CD8-positive, alpha-beta T cell (primary cell): ENCODE measurements at regions of chr13 and their contacts with region 1.

Region 1: GRCh38 chr13:110412132-110412914 is 105.2 kb downstream of the COL4A2 start:
- DNase-seq: peak in 8 of 9 experiments; percentile 15 to 66 (median 48)
- ATAC-seq: peak; percentile 46
- H3K4me3 ChIP-seq: no peak overlapping the region
- H3K4me3 Mint-ChIP-seq: no peak overlapping the region
- H3K27ac ChIP-seq: no peak overlapping the region
- H3K27ac Mint-ChIP-seq: no peak overlapping the region
- H3K4me1 ChIP-seq: no peaks in the 10 kb centered on the region
- H3K4me1 Mint-ChIP-seq: no peaks in the 10 kb centered on the region
- H3K27me3 ChIP-seq: peaks cover 2 to 5% of the 10 kb centered on the region in 2 experiments
- H3K27me3 Mint-ChIP-seq: peaks cover 52% of the 10 kb centered on the region
- CTCF ChIP-seq: peak; percentile 79

Region 2: DNA sequence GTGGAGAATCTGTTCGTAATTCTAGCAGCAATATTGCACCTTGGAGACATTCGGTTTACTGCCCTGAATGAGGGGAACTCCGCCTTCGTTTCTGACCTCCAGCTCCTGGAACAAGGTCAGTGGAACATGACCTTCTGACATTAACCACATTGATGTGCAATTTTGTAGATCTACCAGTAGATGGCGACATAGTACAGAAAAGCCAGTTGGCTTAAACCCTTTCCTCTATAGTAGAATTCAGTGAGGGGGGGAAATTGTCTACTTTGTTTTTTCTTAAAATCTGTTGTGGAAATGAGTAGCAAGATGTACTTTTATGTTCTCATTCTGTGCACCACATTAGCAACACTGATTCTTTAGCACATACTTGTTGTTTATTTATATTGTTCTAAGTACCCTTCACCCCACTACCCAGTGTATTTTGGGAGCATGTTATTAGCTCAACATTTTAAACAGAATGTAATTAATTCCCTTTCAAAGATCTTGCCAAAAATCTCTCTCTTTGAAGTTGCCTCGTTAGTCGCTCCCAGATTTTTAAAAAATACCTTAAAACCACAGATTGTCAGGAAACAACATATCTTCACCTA is 1450.7 kb before region 1 on chr13:
- CTCF ChIA-PET with region 1: interaction called, 12 read pairs
- POLR2A ChIA-PET with region 1: no interaction called
- intact Hi-C with region 1: loop called in 1 of 2 experiments (anchors 1 kb)
- DNase-seq: peak in 5 of 9 experiments; percentile 5 to 57 (median 16)
- ATAC-seq: peak; percentile 52
- H3K4me3 ChIP-seq: no peak overlapping the region
- H3K4me3 Mint-ChIP-seq: no peak overlapping the region
- H3K27ac ChIP-seq: no peak overlapping the region
- H3K27ac Mint-ChIP-seq: no peak overlapping the region
- H3K4me1 ChIP-seq: no peaks in the 10 kb centered on the region
- H3K4me1 Mint-ChIP-seq: no peaks in the 10 kb centered on the region
- H3K27me3 ChIP-seq: no peaks in the 10 kb centered on the region
- H3K27me3 Mint-ChIP-seq: peaks cover 7% of the 10 kb centered on the region
- CTCF ChIP-seq: peak; percentile 97

Region 3: DNA sequence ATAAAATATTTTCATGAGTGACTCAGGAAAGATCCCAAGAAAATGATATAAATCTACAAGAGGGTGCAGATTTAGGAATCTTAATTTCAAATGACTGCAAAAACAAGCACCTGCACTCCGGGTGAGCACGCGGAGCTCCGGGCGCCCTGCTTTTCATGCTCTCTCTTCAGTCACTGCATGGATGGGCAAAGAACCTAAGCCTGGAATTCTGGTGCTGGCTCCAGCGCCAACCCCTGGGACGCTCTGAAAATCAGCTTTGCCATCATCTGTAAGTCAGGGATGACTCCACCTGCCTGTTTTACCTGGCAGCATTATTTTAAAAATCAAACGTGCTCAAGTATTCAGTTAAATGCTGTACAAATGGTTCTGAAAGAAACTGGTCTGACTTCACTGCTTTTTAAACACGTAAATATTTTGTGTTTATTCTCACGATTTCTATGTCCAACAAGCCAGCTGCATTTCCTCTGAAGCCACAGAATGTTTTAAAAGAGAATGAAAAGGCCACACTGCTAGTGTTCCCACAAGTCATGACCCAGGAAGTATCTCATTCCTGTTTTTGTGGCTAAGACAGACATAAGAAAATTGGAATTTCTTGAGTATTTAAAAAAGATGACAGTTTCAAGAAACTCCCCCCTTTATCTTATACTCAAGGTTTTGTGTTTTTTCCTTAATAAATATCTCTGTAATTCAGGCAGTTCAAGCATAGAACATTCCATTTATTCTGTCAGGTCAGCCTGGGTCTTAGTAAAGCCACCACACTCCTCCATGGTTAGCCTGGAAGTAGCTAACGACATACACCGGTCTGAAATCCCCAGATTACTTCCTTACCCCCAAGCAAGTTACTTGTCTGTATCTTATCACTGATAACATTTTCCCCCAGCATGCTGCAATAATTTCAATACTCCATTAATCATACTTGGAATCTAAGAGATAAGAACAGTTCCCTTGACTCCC is 186.4 kb before region 1 on chr13:
- CTCF ChIA-PET with region 1: interaction called, 33 read pairs
- POLR2A ChIA-PET with region 1: no interaction called
- intact Hi-C with region 1: loop called in 1 of 2 experiments (anchors 1 kb)
- DNase-seq: no peak
- ATAC-seq: no peak
- H3K4me3 ChIP-seq: no peak overlapping the region
- H3K4me3 Mint-ChIP-seq: no peak overlapping the region
- H3K27ac ChIP-seq: no peak overlapping the region
- H3K27ac Mint-ChIP-seq: no peak overlapping the region
- H3K4me1 ChIP-seq: no peaks in the 10 kb centered on the region
- H3K4me1 Mint-ChIP-seq: no peaks in the 10 kb centered on the region
- H3K27me3 ChIP-seq: no peaks in the 10 kb centered on the region
- H3K27me3 Mint-ChIP-seq: peaks cover 5% of the 10 kb centered on the region
- CTCF ChIP-seq: no peak

Region 4: GRCh38 chr13:110575322-110576069 is 163.2 kb after region 1 on chr13:
- CTCF ChIA-PET with region 1: no interaction called
- POLR2A ChIA-PET with region 1: no interaction called
- intact Hi-C with region 1: no loop called
- DNase-seq: no peak
- ATAC-seq: no peak
- H3K4me3 ChIP-seq: no peak overlapping the region
- H3K4me3 Mint-ChIP-seq: no peak overlapping the region
- H3K27ac ChIP-seq: no peak overlapping the region
- H3K27ac Mint-ChIP-seq: no peak overlapping the region
- H3K4me1 ChIP-seq: no peaks in the 10 kb centered on the region
- H3K4me1 Mint-ChIP-seq: peaks cover 7% of the 10 kb centered on the region
- H3K27me3 ChIP-seq: no peaks in the 10 kb centered on the region
- H3K27me3 Mint-ChIP-seq: peaks cover 42% of the 10 kb centered on the region
- CTCF ChIP-seq: no peak